ENCODE measurements at regions of chr1 and their contacts with region 1.

Region 1: GRCh38 chr1:156773607-156774006 is 6.3 kb downstream of the PRCC start:
- DNase-seq: no peak
- H3K4me3 ChIP-seq: no peak overlapping the region
- H3K27ac ChIP-seq: no peak overlapping the region
- H3K4me1 ChIP-seq: peaks cover 0 to 5% (median 2%) of the 10 kb centered on the region in 4 experiments; a peak in 3 of 7 replicates
- H3K27me3 ChIP-seq: no peaks in the 10 kb centered on the region
- CTCF ChIP-seq: no peak
- EP300 ChIP-seq: no peak
- POLR2A ChIP-seq: no peak
- RAD21 ChIP-seq: no peak

Region 2: GRCh38 chr1:156652131-156652991 is 121.2 kb before region 1 on chr1:
- CTCF ChIA-PET with region 1: no interaction called
- POLR2A ChIA-PET with region 1: no interaction called
- DNase-seq: peak in 1 of 2 experiments; percentile 92
- H3K4me3 ChIP-seq: no peak overlapping the region
- H3K27ac ChIP-seq: no peak overlapping the region
- H3K4me1 ChIP-seq: peaks cover 2 to 9% (median 4%) of the 10 kb centered on the region in 4 experiments; a peak in 6 of 7 replicates
- H3K27me3 ChIP-seq: peaks cover 2 to 32% (median 26%) of the 10 kb centered on the region in 4 experiments
- CTCF ChIP-seq: no peak
- EP300 ChIP-seq: no peak
- POLR2A ChIP-seq: no peak
- RAD21 ChIP-seq: no peak

Region 3: GRCh38 chr1:156717275-156717805 is 56.3 kb before region 1 on chr1:
- CTCF ChIA-PET with region 1: interaction called, 10 read pairs
- POLR2A ChIA-PET with region 1: interaction called, 4 read pairs
- DNase-seq: no peak
- H3K4me3 ChIP-seq: no peak overlapping the region
- H3K27ac ChIP-seq: no peak overlapping the region
- H3K4me1 ChIP-seq: peaks cover 2 to 8% (median 4%) of the 10 kb centered on the region in 4 experiments; a peak in 4 of 7 replicates
- H3K27me3 ChIP-seq: no peaks in the 10 kb centered on the region
- CTCF ChIP-seq: no peak
- EP300 ChIP-seq: no peak
- POLR2A ChIP-seq: no peak
- RAD21 ChIP-seq: no peak

Region 4: DNA sequence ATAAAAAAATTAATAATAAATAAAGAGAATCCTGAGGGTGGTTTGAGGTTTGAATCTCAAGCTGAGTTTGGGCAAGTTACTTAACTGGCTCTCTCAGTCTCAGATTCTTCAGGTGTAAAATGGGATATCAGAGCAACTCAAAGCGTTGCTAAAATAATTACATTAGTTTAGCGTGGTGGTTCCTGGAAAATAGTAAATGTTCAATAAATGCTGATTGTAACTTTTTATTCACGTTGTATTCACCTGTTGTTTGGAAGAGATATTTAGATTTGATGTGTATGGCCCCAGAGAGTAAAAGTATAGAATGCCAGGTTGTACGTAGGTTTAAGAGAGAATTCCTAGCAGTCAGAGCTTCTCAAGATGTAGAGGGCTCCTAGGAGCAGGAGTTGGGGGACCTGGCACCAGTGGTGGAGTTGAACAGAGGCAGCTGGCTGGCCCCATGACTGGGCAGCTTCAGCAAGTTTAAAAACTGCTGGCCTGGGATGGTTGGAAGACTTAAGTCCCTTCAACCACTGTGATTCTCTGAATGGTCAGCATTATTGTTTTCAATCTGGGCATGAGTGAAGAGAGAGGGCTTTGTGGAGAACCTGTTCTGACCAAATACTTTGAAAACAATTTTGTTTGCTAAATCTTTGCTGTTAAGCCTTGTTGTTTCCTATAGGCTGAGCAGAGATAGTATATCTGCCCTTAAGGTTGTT is 16.2 kb after region 1 on chr1:
- CTCF ChIA-PET with region 1: interaction called, 30 read pairs
- POLR2A ChIA-PET with region 1: interaction called, 8 read pairs
- DNase-seq: no peak
- H3K4me3 ChIP-seq: no peak overlapping the region
- H3K27ac ChIP-seq: no peak overlapping the region
- H3K4me1 ChIP-seq: no peaks in the 10 kb centered on the region
- H3K27me3 ChIP-seq: no peaks in the 10 kb centered on the region
- CTCF ChIP-seq: no peak
- EP300 ChIP-seq: no peak
- POLR2A ChIP-seq: no peak
- RAD21 ChIP-seq: no peak

Region 5: GRCh38 chr1:156828400-156829124 is 55.0 kb after region 1 on chr1:
- CTCF ChIA-PET with region 1: no interaction called
- POLR2A ChIA-PET with region 1: no interaction called
- DNase-seq: no peak
- H3K4me3 ChIP-seq: no peak overlapping the region
- H3K27ac ChIP-seq: no peak overlapping the region
- H3K4me1 ChIP-seq: no peaks in the 10 kb centered on the region
- H3K27me3 ChIP-seq: peaks cover 0 to 13% (median 5%) of the 10 kb centered on the region in 4 experiments; a peak in 5 of 7 replicates
- CTCF ChIP-seq: no peak
- EP300 ChIP-seq: no peak
- POLR2A ChIP-seq: no peak
- RAD21 ChIP-seq: no peak

Measured in H1 (cell line).